ENCODE measurements at regions of chr5 and their contacts with region 1.

Region 1: GRCh38 chr5:159515909-159516415 is 185.7 kb upstream of the IL12B start:
- DNase-seq: peak; percentile 87
- H3K4me3 Mint-ChIP-seq: no peak overlapping the region
- H3K27ac Mint-ChIP-seq: no peak overlapping the region
- H3K4me1 Mint-ChIP-seq: peaks cover 9% of the 10 kb centered on the region
- H3K27me3 Mint-ChIP-seq: peaks cover 4% of the 10 kb centered on the region

Region 2: DNA sequence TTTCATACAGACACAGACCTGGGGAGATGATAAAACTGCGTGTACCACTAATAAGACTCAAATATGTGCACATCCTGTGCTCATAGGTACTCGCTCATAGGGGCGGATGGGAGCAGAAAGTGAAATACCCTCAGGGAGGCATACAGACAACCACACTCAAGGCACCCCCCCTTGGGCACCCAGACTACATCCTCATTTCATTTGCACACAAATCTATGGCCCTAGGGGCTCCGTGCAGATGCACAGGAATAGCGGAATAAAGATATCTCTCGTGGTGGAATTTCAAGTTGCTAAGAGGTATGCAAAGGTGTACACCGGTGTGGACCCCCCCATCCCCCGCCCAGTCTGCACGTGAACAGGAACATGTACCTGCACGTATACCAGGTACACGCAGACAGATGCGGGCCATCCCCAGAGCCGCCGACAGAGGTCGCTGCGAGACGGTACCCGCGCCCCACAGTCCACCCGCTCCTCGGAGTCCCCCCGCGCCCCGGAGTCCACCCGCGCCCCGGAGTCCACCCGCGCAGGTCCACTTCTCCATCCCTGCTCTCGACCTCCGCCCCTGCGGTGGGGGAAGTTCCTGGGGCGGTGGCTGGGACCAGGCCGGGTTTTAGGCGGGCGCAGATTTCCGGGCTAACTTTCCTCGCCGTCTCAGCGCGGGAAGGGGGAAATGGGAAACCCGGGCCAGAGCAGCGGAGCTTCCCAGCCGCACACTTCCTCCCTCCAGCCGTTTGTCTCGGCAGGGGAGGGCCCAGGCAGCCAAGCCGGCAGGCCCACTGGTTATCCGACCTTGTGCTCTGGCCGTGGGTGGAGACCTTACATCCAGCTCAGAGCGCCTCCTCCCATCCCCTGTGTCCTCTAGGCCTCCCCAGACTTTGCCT is 184.6 kb before region 1 on chr5:
- CTCF ChIA-PET with region 1: no interaction called
- intact Hi-C with region 1: loop called (anchors 5 kb)
- DNase-seq: peak; percentile 79
- H3K4me3 Mint-ChIP-seq: peak overlapping the region; percentile 52
- H3K27ac Mint-ChIP-seq: no peak overlapping the region
- H3K4me1 Mint-ChIP-seq: peaks cover 11% of the 10 kb centered on the region
- H3K27me3 Mint-ChIP-seq: no peaks in the 10 kb centered on the region

Region 3: DNA sequence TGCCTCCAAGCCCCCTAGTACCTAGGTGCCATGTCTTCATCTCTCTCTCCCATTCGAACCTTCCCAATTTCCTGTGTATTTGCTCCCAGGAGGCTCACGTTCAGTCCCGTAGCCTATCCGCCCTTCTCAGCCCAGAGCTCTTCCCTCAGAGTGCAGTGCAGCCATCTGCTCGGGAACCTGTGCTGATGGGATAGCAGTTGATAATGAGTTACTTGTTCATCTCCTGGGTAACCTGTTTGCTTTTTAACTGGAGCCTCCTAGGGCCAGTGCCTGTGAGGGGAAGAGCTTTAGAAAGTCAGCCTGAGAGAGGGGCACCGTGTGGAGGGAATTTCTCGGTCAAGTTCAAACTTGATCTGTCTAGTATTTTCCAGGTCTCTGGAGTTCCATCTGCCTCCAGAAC is 44.1 kb after region 1 on chr5:
- CTCF ChIA-PET with region 1: no interaction called
- intact Hi-C with region 1: no loop called
- DNase-seq: no peak
- H3K4me3 Mint-ChIP-seq: no peak overlapping the region
- H3K27ac Mint-ChIP-seq: no peak overlapping the region
- H3K4me1 Mint-ChIP-seq: no peaks in the 10 kb centered on the region
- H3K27me3 Mint-ChIP-seq: peaks cover 5% of the 10 kb centered on the region

Region 4: GRCh38 chr5:159678657-159679392 is 162.9 kb after region 1 on chr5:
- CTCF ChIA-PET with region 1: no interaction called
- intact Hi-C with region 1: loop called (anchors 2 kb)
- DNase-seq: peak; percentile 19
- H3K4me3 Mint-ChIP-seq: no peak overlapping the region
- H3K27ac Mint-ChIP-seq: no peak overlapping the region
- H3K4me1 Mint-ChIP-seq: peaks cover 11% of the 10 kb centered on the region
- H3K27me3 Mint-ChIP-seq: no peaks in the 10 kb centered on the region

Region 5: DNA sequence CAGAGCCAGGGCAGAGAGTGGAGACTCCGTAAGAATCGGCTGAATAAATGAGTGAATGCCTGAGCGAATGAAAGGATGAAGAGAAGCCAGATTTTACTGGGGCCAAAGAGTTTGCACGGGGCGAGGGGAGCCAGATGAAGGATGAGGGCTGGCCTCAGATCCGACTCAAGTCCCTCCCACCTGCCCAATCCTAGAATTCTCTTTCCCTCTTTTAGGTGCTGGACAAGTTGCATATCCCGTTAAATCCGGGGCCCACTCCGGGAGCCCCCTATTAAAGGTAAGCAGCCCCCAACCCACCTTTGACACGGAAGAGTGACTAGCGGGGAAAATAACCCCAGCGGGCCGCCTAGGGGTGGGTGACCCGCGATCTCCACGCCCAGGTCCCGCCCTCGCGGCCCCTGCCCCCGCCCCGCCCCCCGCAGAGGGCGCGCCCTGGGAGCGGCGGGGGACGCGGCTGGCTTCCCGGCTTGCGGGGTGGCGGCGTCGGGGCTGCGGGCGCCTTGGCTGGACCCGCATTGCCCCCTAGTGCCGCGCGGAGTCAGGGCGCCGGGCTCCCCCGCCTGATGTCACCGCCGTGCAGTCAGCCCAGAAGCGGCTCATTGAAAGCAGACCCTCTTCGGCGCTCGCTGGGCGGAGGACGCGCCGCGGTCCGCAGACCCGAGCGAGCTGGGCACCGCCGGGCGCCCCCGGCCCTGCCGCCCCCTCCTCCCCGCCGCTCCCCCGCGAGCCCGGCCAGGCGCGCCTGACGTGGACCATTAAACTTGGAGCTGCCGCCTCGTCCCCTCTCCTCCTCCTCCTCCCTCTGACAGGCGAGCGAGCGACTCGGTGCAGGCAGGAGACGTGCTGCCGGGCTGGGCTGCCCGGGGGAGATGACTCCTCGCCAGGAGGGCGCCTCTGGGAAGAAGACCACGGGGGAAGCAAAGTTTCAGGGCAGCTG is 400.2 kb after region 1 on chr5 and contains the start of gene ADRA1B:
- CTCF ChIA-PET with region 1: interaction called, 3 read pairs
- intact Hi-C with region 1: loop called (anchors 1 kb)
- DNase-seq: peak; percentile 66
- H3K4me3 Mint-ChIP-seq: peak within 1 kb of the TSS; percentile 36
- H3K27ac Mint-ChIP-seq: no peak within 1 kb of the TSS
- H3K4me1 Mint-ChIP-seq: peaks cover 6% of the 10 kb centered on the region
- H3K27me3 Mint-ChIP-seq: peaks cover 44% of the 10 kb centered on the region
- total RNA-seq, gene ADRA1B: not detected

Region 6: DNA sequence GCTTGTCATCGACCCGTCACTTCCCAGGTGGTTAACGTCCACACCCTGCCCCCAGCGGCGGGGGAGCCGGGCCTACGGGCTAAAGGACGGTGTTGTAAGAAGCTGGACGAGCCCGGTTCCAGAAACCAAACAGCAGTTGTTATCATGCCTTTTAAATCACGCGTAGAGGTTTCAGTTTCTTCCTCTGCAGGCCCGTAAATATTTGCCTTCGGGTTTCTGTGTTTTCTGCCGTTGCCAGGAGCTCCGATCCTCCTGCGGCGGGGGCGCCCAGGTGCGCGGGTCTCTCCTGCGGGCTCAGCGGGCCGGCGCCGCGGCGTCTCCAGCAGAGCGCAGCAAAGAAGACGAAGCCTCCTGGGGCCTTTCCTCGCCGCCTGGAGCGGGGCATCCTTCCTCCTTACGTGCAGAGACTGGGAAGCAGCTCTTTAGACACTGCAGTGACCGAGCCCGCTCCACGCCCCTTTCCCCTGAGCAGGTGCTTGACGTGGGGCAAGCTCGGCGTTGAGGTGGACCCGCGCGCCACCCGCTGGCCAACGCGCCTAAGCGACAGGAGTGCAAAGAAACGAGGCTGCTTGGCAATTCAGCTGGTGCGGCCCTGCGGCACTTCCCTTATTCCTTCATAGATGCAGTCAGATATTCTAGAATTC is 471.2 kb after region 1 on chr5:
- CTCF ChIA-PET with region 1: interaction called, 6 read pairs
- intact Hi-C with region 1: loop called (anchors 1 kb)
- DNase-seq: peak; percentile 83
- H3K4me3 Mint-ChIP-seq: peak overlapping the region; percentile 56
- H3K27ac Mint-ChIP-seq: no peak overlapping the region
- H3K4me1 Mint-ChIP-seq: no peaks in the 10 kb centered on the region
- H3K27me3 Mint-ChIP-seq: peaks cover 20% of the 10 kb centered on the region